ENCODE measurements at regions of chr1 and their contacts with region 1.

Region 1: DNA sequence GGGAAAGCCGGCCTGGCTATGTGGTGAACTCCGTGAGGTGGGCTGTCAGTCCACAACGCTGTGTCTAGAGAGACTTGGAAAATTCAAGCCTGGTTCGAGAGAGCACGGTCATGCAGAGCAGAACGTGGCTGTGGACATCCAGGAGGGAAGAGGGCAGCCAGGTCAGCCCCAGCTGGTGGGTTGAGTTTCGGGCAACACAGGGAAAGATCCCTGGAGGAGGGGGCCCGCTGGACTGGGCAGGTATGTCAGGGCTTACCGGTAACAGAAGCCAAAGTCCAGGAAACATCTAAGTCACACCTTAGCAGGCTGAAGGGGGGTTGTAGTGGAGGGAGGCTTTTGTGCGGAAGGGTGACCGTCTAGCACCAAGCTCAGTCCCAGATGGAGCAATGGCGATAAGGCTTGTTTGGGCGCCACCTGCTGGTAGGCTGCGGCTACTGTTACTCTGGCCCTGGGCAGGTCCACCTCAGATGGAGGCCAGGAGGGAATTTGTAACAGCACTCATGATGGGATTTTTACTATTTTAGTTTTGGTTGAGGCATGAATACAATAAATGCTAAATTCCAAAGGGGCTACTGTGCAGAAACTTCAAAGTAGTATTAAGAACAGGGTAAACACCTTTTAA is 143.3 kb upstream of the ZNF644 start:
- DNase-seq: peak; percentile 52
- H3K4me3 ChIP-seq: no peak overlapping the region
- H3K27ac ChIP-seq: no peak overlapping the region
- H3K4me1 ChIP-seq: no peaks in the 10 kb centered on the region
- H3K27me3 ChIP-seq: no peaks in the 10 kb centered on the region
- CTCF ChIP-seq: peak; percentile 97 to 98
- POLR2A ChIP-seq: no peak

Region 2: GRCh38 chr1:90133133-90133532 is 1032.0 kb before region 1 on chr1:
- CTCF ChIA-PET with region 1: interaction called, 64 read pairs
- POLR2A ChIA-PET with region 1: no interaction called
- dilution Hi-C with region 1: no loop called
- intact Hi-C with region 1: loop called (anchors 1 kb)
- DNase-seq: peak; percentile 35
- H3K4me3 ChIP-seq: no peak overlapping the region
- H3K27ac ChIP-seq: no peak overlapping the region
- H3K4me1 ChIP-seq: no peaks in the 10 kb centered on the region
- H3K27me3 ChIP-seq: no peaks in the 10 kb centered on the region
- CTCF ChIP-seq: peak; percentile 19 to 36
- POLR2A ChIP-seq: no peak

Region 3: GRCh38 chr1:90850898-90851710 is 314.0 kb before region 1 on chr1:
- CTCF ChIA-PET with region 1: interaction called, 4 read pairs
- POLR2A ChIA-PET with region 1: no interaction called
- dilution Hi-C with region 1: no loop called
- intact Hi-C with region 1: loop called (anchors 5 kb)
- DNase-seq: peak; percentile 55
- H3K4me3 ChIP-seq: peak overlapping the region; percentile 32 to 45 (median 42)
- H3K27ac ChIP-seq: no peak overlapping the region
- H3K4me1 ChIP-seq: peaks cover 12% of the 10 kb centered on the region
- H3K27me3 ChIP-seq: peaks cover 14 to 44% of the 10 kb centered on the region in 2 experiments
- CTCF ChIP-seq: peak; percentile 24 to 68
- POLR2A ChIP-seq: no peak

Region 4: GRCh38 chr1:90986953-90987352 is 178.2 kb before region 1 on chr1:
- CTCF ChIA-PET with region 1: no interaction called
- POLR2A ChIA-PET with region 1: no interaction called
- dilution Hi-C with region 1: no loop called
- intact Hi-C with region 1: no loop called
- DNase-seq: no peak
- H3K4me3 ChIP-seq: no peak overlapping the region
- H3K27ac ChIP-seq: no peak overlapping the region
- H3K4me1 ChIP-seq: no peaks in the 10 kb centered on the region
- H3K27me3 ChIP-seq: no peaks in the 10 kb centered on the region
- CTCF ChIP-seq: no peak
- POLR2A ChIP-seq: no peak

Region 5: DNA sequence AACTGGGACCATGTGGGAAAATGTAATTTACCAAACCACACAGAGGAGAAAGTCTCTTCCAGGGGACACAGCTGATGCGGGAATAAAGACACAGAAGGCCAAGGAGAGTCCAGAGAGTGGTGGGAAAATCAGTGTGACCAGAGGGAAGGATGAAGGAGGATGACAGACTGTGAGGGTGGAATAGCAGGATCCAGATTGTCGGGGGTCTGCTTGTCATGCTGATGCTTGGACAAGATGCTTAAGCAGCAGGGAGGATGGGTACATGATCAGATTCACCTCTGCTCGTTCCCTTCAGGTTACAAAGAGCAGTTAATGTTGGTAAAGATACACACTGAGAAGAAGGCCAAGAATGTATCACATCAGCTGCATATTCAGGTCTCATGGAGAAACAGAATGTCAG is 26.2 kb before region 1 on chr1:
- CTCF ChIA-PET with region 1: interaction called, 12 read pairs
- POLR2A ChIA-PET with region 1: no interaction called
- dilution Hi-C with region 1: no loop called
- intact Hi-C with region 1: no loop called
- DNase-seq: no peak
- H3K4me3 ChIP-seq: no peak overlapping the region
- H3K27ac ChIP-seq: no peak overlapping the region
- H3K4me1 ChIP-seq: no peaks in the 10 kb centered on the region
- H3K27me3 ChIP-seq: no peaks in the 10 kb centered on the region
- CTCF ChIP-seq: no peak
- POLR2A ChIP-seq: no peak

Region 6: DNA sequence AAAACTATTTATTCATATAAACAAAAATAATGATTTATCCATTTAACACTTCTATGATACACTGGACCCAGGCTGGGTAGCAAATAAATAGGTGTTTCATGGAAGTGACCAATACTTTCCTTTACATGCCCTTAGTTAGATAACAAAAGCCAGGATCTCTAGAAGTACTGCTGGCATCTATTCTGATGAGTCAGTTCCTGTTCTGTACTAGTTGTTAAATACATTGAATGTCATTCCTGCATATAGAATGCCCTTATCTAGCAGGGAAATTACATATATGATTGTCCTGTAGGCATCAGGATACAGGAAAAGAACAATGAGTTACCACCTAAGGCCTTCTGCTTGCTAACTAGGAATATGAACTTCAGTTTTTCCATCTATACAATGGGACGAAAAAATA is 108.7 kb after region 1 on chr1:
- CTCF ChIA-PET with region 1: interaction called, 502 read pairs
- POLR2A ChIA-PET with region 1: no interaction called
- dilution Hi-C with region 1: no loop called
- intact Hi-C with region 1: loop called (anchors 1 kb)
- DNase-seq: peak; percentile 75
- H3K4me3 ChIP-seq: no peak overlapping the region
- H3K27ac ChIP-seq: no peak overlapping the region
- H3K4me1 ChIP-seq: peaks cover 4% of the 10 kb centered on the region
- H3K27me3 ChIP-seq: no peaks in the 10 kb centered on the region
- CTCF ChIP-seq: no peak
- POLR2A ChIP-seq: no peak

Region 7: GRCh38 chr1:91500756-91501522 is 335.8 kb after region 1 on chr1 and contains the start of gene CDC7:
- CTCF ChIA-PET with region 1: interaction called, 21 read pairs
- POLR2A ChIA-PET with region 1: no interaction called
- dilution Hi-C with region 1: no loop called
- intact Hi-C with region 1: loop called (anchors 1 kb)
- DNase-seq: peak; percentile 96
- H3K4me3 ChIP-seq: peak within 1 kb of the TSS; percentile 60 to 89 (median 62)
- H3K27ac ChIP-seq: peak within 1 kb of the TSS; percentile 91
- H3K4me1 ChIP-seq: peaks cover 16% of the 10 kb centered on the region
- H3K27me3 ChIP-seq: no peaks in the 10 kb centered on the region
- CTCF ChIP-seq: peak; percentile 51 to 54
- POLR2A ChIP-seq: peak; percentile 61
- total RNA-seq, gene CDC7: 11.7 and 13.4 TPM in 2 replicates

Measured in endothelial cell of umbilical vein (primary cell).